Naive thymus-derived CD4-positive, alpha-beta T cell (primary cell): ENCODE measurements at regions of chr17 and their contacts with region 1.

Region 1: DNA sequence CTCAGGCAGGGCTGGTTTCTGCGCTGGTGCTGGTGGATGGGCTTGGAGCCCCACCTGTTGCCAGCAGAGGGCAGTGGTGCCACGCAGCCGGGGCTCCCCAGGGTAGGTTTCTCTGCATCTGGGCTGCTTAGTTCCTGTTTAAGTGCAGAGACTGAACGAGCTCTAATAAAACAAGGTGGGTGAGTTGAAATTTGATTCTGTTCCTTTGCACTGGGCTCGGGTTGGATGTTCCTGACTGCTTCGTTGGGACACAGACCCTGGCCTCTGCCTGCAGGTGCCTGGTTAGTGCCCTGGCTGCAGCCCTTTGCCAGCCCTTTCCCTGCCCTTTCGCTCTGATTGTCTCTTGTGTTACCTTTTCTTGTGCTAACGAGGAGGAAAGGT is 30.0 kb downstream of the TBCD start:
- DNase-seq: peak; percentile 71 to 90 (median 84)
- ATAC-seq: peak; percentile 99
- H3K4me3 ChIP-seq: no peak overlapping the region
- H3K4me3 Mint-ChIP-seq: no peak overlapping the region
- H3K27ac ChIP-seq: no peak overlapping the region
- H3K27ac Mint-ChIP-seq: peak overlapping the region in 6 of 9 donors; percentile 11 to 74 (median 46)
- H3K4me1 ChIP-seq: no peaks in the 10 kb centered on the region
- H3K4me1 Mint-ChIP-seq: peaks cover 5 to 18% (median 12%) of the 10 kb centered on the region in 7 donors
- H3K27me3 ChIP-seq: no peaks in the 10 kb centered on the region
- H3K27me3 Mint-ChIP-seq: no peaks in the 10 kb centered on the region

Region 2: DNA sequence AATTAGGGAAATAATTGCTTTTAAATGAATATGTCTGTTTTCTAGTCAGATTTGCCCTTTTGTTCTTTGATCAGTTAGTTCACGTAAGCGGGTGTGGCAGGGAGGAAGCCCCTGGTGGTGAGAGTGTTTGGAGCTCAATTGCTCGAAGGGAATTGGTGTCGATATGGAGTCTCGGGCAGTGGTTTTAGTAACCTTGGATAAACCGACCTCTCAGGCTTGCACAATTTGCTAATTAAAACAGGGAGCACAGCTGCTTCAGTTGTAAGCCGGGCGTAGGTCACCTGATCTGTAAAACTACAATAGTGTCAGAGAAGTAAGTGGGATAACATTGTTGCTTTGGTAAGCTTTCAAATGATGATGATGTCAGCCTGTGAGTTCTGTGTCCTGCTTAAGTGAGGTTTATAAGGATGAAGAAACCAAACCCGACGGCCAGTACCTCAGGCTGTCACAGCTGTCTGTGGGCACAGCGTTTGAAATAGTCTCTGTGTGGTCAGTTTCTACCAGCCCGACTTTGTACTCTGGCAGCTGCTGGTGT is 55.0 kb after region 1 on chr17:
- CTCF ChIA-PET with region 1: no interaction called
- POLR2A ChIA-PET with region 1: no interaction called
- intact Hi-C with region 1: no loop called
- DNase-seq: no peak
- ATAC-seq: no peak
- H3K4me3 ChIP-seq: no peak overlapping the region
- H3K4me3 Mint-ChIP-seq: no peak overlapping the region
- H3K27ac ChIP-seq: no peak overlapping the region
- H3K27ac Mint-ChIP-seq: peak overlapping the region in 4 of 9 donors; percentile 4 to 63 (median 19)
- H3K4me1 ChIP-seq: no peaks in the 10 kb centered on the region
- H3K4me1 Mint-ChIP-seq: peaks cover 0 to 8% (median 1%) of the 10 kb centered on the region in 7 donors
- H3K27me3 ChIP-seq: no peaks in the 10 kb centered on the region
- H3K27me3 Mint-ChIP-seq: no peaks in the 10 kb centered on the region

Region 3: GRCh38 chr17:82851381-82851780 is 69.5 kb after region 1 on chr17:
- CTCF ChIA-PET with region 1: no interaction called
- POLR2A ChIA-PET with region 1: no interaction called
- intact Hi-C with region 1: no loop called
- DNase-seq: no peak
- ATAC-seq: no peak
- H3K4me3 ChIP-seq: no peak overlapping the region
- H3K4me3 Mint-ChIP-seq: no peak overlapping the region
- H3K27ac ChIP-seq: no peak overlapping the region
- H3K27ac Mint-ChIP-seq: peak overlapping the region in 1 of 9 donors; percentile 51
- H3K4me1 ChIP-seq: no peaks in the 10 kb centered on the region
- H3K4me1 Mint-ChIP-seq: peaks cover 8 to 18% (median 14%) of the 10 kb centered on the region in 7 donors
- H3K27me3 ChIP-seq: no peaks in the 10 kb centered on the region
- H3K27me3 Mint-ChIP-seq: no peaks in the 10 kb centered on the region

Region 4: GRCh38 chr17:82892899-82893565 is 111.1 kb after region 1 on chr17:
- CTCF ChIA-PET with region 1: interaction called, 4 read pairs
- POLR2A ChIA-PET with region 1: interaction called, 5 read pairs
- intact Hi-C with region 1: loop called in 1 of 2 experiments (anchors 1 kb)
- DNase-seq: peak in 8 of 9 donors; percentile 42 to 91 (median 74)
- ATAC-seq: peak; percentile 98
- H3K4me3 ChIP-seq: no peak overlapping the region
- H3K4me3 Mint-ChIP-seq: peak overlapping the region in 9 of 10 donors; percentile 43 to 82 (median 77)
- H3K27ac ChIP-seq: peak overlapping the region; percentile 67
- H3K27ac Mint-ChIP-seq: peak overlapping the region; percentile 78 to 97 (median 93)
- H3K4me1 ChIP-seq: peaks cover 17 to 23% of the 10 kb centered on the region in 2 donors
- H3K4me1 Mint-ChIP-seq: peaks cover 12 to 41% (median 33%) of the 10 kb centered on the region in 7 donors
- H3K27me3 ChIP-seq: no peaks in the 10 kb centered on the region
- H3K27me3 Mint-ChIP-seq: no peaks in the 10 kb centered on the region

Region 5: DNA sequence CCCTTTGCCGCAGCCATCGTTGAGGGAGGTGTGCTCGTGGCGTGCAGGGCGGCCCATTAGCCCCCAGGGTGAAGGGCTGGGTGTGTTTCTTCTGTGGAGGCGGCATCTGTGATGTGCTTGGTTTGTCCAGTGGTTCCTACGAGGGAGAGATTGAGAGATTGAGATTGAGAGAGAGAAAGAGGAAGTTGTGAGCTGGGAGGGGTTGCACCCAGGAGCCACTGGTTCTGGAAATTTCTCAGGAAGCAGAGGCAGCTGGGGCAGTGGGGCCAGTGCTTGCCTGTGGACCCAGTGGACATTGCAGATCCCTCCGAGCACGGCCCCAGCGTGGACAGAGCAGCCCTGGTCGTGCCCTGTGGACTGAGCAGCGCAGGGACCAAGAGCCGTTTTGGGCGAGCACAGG is 129.9 kb after region 1 on chr17:
- CTCF ChIA-PET with region 1: interaction called, 14 read pairs
- POLR2A ChIA-PET with region 1: no interaction called
- intact Hi-C with region 1: loop called (anchors 1 kb)
- DNase-seq: no peak
- ATAC-seq: peak; percentile 35
- H3K4me3 ChIP-seq: no peak overlapping the region
- H3K4me3 Mint-ChIP-seq: peak overlapping the region in 1 of 10 donors; percentile 38
- H3K27ac ChIP-seq: no peak overlapping the region
- H3K27ac Mint-ChIP-seq: peak overlapping the region in 7 of 9 donors; percentile 6 to 89 (median 63)
- H3K4me1 ChIP-seq: no peaks in the 10 kb centered on the region
- H3K4me1 Mint-ChIP-seq: peaks cover 4 to 30% (median 23%) of the 10 kb centered on the region in 7 donors
- H3K27me3 ChIP-seq: no peaks in the 10 kb centered on the region
- H3K27me3 Mint-ChIP-seq: no peaks in the 10 kb centered on the region

Region 6: GRCh38 chr17:82917691-82918345 is 135.9 kb after region 1 on chr17:
- CTCF ChIA-PET with region 1: interaction called, 14 read pairs
- POLR2A ChIA-PET with region 1: interaction called, 3 read pairs
- intact Hi-C with region 1: loop called (anchors 1 kb)
- DNase-seq: peak in 3 of 9 donors; percentile 21 to 32 (median 28)
- ATAC-seq: peak; percentile 42
- H3K4me3 ChIP-seq: no peak overlapping the region
- H3K4me3 Mint-ChIP-seq: no peak overlapping the region
- H3K27ac ChIP-seq: no peak overlapping the region
- H3K27ac Mint-ChIP-seq: no peak overlapping the region
- H3K4me1 ChIP-seq: no peaks in the 10 kb centered on the region
- H3K4me1 Mint-ChIP-seq: peaks cover 0 to 11% (median 7%) of the 10 kb centered on the region in 7 donors
- H3K27me3 ChIP-seq: no peaks in the 10 kb centered on the region
- H3K27me3 Mint-ChIP-seq: no peaks in the 10 kb centered on the region

Region 7: GRCh38 chr17:82962864-82963684 is 181.2 kb after region 1 on chr17:
- CTCF ChIA-PET with region 1: interaction called, 3 read pairs
- POLR2A ChIA-PET with region 1: no interaction called
- intact Hi-C with region 1: loop called in 1 of 2 experiments (anchors 1 kb)
- DNase-seq: peak in 6 of 9 donors; percentile 12 to 52 (median 32)
- ATAC-seq: peak; percentile 87
- H3K4me3 ChIP-seq: no peak overlapping the region
- H3K4me3 Mint-ChIP-seq: peak overlapping the region in 6 of 10 donors; percentile 9 to 75 (median 44)
- H3K27ac ChIP-seq: no peak overlapping the region
- H3K27ac Mint-ChIP-seq: peak overlapping the region in 1 of 9 donors; percentile 51
- H3K4me1 ChIP-seq: peaks cover 0 to 7% of the 10 kb centered on the region in 2 donors
- H3K4me1 Mint-ChIP-seq: peaks cover 6 to 12% (median 7%) of the 10 kb centered on the region in 7 donors
- H3K27me3 ChIP-seq: no peaks in the 10 kb centered on the region
- H3K27me3 Mint-ChIP-seq: no peaks in the 10 kb centered on the region

Region 8: GRCh38 chr17:83006515-83007455 is 224.9 kb after region 1 on chr17:
- CTCF ChIA-PET with region 1: no interaction called
- POLR2A ChIA-PET with region 1: no interaction called
- intact Hi-C with region 1: no loop called
- DNase-seq: no peak
- ATAC-seq: no peak
- H3K4me3 ChIP-seq: no peak overlapping the region
- H3K4me3 Mint-ChIP-seq: no peak overlapping the region
- H3K27ac ChIP-seq: no peak overlapping the region
- H3K27ac Mint-ChIP-seq: peak overlapping the region in 1 of 9 donors; percentile 81
- H3K4me1 ChIP-seq: no peaks in the 10 kb centered on the region
- H3K4me1 Mint-ChIP-seq: peaks cover 0 to 4% (median 0%) of the 10 kb centered on the region in 7 donors
- H3K27me3 ChIP-seq: no peaks in the 10 kb centered on the region
- H3K27me3 Mint-ChIP-seq: no peaks in the 10 kb centered on the region